ENCODE measurements at regions of chr1 and their contacts with region 1.

Region 1: DNA sequence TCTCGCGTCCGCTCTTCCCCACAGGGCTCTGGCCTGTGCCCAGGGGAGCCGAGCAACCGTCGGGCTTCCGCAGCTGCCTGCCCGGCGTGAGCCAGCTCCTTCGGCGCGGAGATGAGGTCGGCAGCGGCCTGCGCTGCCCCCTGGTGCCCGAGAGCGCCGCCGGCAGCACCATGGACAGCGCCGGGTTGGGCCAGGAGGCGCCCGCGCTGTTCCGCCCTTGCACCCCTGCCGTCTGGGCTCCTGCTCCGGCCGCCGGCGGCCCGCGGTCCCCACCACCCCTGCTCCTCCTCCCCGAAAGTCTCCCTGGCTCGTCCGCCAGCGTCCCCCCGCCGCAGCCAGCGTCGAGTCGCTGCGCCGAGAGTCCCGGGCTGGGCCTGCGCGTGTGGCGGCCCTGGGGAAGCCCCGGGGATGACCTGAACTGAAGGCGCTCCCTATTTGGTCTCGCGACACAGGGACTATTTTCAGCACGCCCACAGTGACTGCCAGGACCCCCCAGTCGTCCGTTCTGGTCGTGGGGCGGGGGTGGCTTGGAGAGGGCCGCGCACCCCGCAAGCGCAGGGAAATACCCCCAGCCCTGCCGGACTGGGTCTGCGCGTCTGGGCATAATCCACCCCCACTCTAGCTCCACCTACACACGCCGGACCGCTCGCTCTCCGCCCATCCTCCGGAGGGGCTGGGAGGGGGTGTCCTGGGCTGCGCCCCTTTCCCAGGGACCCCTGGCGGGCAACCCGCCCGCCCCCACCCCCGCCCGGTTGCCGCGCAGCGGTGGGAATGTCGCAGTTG is 1.3 kb downstream of the HES3 start:
- DNase-seq: peak; percentile 64
- H3K4me3 ChIP-seq: peak overlapping the region in 1 of 2 donors; percentile 8
- H3K27ac ChIP-seq: no peak overlapping the region
- H3K4me1 ChIP-seq: peaks cover 12% of the 10 kb centered on the region
- H3K27me3 ChIP-seq: peaks cover 33% of the 10 kb centered on the region
- CTCF ChIP-seq: peak; percentile 53 to 93 (median 82)
- POLR2A ChIP-seq: no peak

Region 2: GRCh38 chr1:5865774-5866173 is 379.5 kb before region 1 on chr1:
- intact Hi-C with region 1: no loop called
- DNase-seq: no peak
- H3K4me3 ChIP-seq: no peak overlapping the region
- H3K27ac ChIP-seq: no peak overlapping the region
- H3K4me1 ChIP-seq: no peaks in the 10 kb centered on the region
- H3K27me3 ChIP-seq: no peaks in the 10 kb centered on the region
- CTCF ChIP-seq: no peak
- POLR2A ChIP-seq: no peak

Region 3: GRCh38 chr1:6393400-6394187 is 148.3 kb after region 1 on chr1 and contains the start of gene ACOT7:
- intact Hi-C with region 1: loop called (anchors 5 kb)
- DNase-seq: peak; percentile 88
- H3K4me3 ChIP-seq: peak within 1 kb of the TSS; percentile 59 to 77
- H3K27ac ChIP-seq: peak within 1 kb of the TSS; percentile 97 to 98
- H3K4me1 ChIP-seq: peaks cover 4% of the 10 kb centered on the region
- H3K27me3 ChIP-seq: no peaks in the 10 kb centered on the region
- CTCF ChIP-seq: peak in 3 of 4 experiments; percentile 19 to 49 (median 39)
- POLR2A ChIP-seq: peak; percentile 76
- total RNA-seq, gene ACOT7: 16.9 to 24.9 TPM

Region 4: GRCh38 chr1:6438047-6438525 is 192.8 kb after region 1 on chr1:
- intact Hi-C with region 1: loop called (anchors 2 kb)
- DNase-seq: peak; percentile 54
- H3K4me3 ChIP-seq: no peak overlapping the region
- H3K27ac ChIP-seq: no peak overlapping the region
- H3K4me1 ChIP-seq: no peaks in the 10 kb centered on the region
- H3K27me3 ChIP-seq: no peaks in the 10 kb centered on the region
- CTCF ChIP-seq: peak; percentile 88 to 92 (median 90)
- POLR2A ChIP-seq: no peak

Measured in prostate gland (tissue), 2 donors.